ENCODE measurements at regions of chr17 and their contacts with region 1.

Region 1: DNA sequence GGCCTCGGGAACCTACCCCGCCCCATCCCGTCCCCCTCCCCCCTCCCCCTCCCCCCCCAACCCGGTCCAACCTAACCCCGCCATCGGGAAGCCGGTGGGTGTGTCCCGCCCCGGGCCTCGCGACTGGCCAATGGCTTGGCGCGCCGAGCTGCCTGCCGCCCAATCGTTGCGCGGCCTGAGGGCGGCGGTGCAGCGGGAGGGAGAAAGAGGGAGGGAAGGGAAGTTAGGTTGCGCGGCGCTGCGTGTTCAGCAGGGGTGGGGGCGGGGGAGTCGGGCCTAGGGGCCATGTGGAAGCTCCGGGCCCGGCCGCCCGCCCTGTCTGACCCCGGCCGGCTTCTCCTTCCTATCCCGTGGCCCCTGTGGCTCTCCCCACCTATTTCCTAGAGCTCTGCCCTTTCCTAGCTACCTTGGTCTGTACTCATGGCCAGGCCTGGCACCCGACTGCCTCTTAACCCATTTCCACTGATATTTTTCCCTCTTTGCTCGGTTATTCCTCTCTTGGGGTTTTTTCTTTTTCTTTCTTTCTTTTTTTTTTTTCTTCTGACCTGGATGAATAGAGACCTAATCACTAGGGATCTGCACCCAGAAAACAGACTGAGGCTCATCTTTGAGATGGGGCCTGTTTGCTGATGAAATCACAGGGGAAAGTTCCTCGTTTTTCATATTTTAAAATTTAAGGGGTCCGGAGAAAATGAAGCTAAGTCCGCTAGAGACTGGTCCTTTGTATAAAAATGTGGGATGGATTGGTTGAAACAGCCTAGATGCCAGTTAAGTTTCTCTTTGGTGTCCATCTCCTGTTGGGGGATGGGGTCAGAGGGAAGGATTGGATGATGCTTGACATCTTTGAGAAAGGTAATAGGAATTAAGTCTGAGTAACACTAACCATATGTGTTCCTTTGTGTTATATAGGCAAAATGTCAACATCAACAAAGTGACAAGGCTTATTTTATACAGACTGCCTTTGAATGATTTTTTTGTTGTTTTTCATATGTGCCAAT is 1.1 kb downstream of the KPNB1 start:
- DNase-seq: peak; percentile 97 to 98
- ATAC-seq: peak; percentile 78 to 81 (median 80)
- H3K4me3 ChIP-seq: peak overlapping the region; percentile 92
- H3K27ac ChIP-seq: peak overlapping the region; percentile 93
- H3K4me1 ChIP-seq: peaks cover 41% of the 10 kb centered on the region
- H3K27me3 ChIP-seq: no peaks in the 10 kb centered on the region
- CTCF ChIP-seq: no peak

Region 2: DNA sequence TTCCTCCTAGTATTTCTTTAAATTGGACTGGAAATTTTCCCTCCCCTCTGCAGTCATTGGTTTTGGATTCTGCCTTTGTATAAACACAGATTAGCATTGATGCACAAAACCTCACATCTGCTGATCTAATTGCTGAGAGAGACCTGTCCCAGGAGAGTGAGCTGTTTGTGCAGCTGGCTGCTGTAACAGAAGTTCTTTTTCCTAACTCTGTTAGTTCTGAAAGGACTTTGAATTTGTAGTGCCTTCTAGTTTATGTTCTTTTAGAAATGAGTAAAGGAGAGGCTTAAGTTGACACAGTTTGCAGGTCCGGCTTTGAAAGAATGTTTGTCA is 46.3 kb before region 1 on chr17:
- intact Hi-C with region 1: loop called in 1 of 2 experiments (anchors 10 kb)
- DNase-seq: no peak
- ATAC-seq: peak in 1 of 4 donors; percentile 56
- H3K4me3 ChIP-seq: no peak overlapping the region
- H3K27ac ChIP-seq: no peak overlapping the region
- H3K4me1 ChIP-seq: no peaks in the 10 kb centered on the region
- H3K27me3 ChIP-seq: no peaks in the 10 kb centered on the region
- CTCF ChIP-seq: no peak

Region 3: DNA sequence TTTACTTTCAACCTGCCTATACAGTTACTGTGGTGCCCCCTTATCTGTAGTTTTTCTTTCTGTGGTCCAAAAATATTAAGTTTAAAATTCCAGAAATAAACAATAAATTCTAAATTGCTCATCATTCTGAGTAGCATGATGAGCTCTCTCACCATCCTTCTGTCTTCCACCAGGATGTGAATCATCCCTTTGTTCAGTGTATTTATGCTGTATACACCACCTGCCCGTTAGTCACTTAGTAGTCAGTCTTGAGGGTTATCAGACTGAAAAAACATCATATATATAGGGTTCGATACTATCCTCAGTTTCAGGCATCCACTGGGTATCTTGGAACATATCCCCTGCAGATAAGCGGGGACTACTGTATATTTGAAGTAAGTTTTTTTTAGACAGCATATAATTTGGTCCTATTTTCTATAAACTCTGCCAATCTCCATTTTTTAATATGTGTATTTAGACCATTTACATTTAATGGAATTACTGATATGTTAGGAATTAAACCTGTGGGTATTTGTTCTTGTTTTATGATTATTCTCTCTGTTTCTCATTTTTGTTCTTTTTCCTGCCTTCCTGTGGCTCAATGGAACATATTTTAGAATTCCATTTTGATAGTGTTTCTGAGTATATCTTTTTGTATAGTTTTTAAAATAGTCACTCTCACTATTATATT is 113.2 kb after region 1 on chr17:
- intact Hi-C with region 1: no loop called
- DNase-seq: no peak
- ATAC-seq: no peak
- H3K4me3 ChIP-seq: no peak overlapping the region
- H3K27ac ChIP-seq: no peak overlapping the region
- H3K4me1 ChIP-seq: no peaks in the 10 kb centered on the region
- H3K27me3 ChIP-seq: peaks cover 3% of the 10 kb centered on the region in 3 donors
- CTCF ChIP-seq: no peak

Region 4: GRCh38 chr17:47802341-47803022 is 151.7 kb after region 1 on chr17:
- intact Hi-C with region 1: no loop called
- DNase-seq: no peak
- ATAC-seq: peak; percentile 56 to 64 (median 62)
- H3K4me3 ChIP-seq: no peak overlapping the region
- H3K27ac ChIP-seq: no peak overlapping the region
- H3K4me1 ChIP-seq: peaks cover 16% of the 10 kb centered on the region
- H3K27me3 ChIP-seq: no peaks in the 10 kb centered on the region
- CTCF ChIP-seq: peak; percentile 59

Measured in psoas muscle (tissue), 8 donors.